Esophagus muscularis mucosa (tissue), 4 donors: ENCODE measurements at regions of chr6 and their contacts with region 1.

Region 1: GRCh38 chr6:49849213-49849907 is 17.0 kb downstream of the CRISP1 start:
- DNase-seq: no peak
- H3K4me3 ChIP-seq: no peak overlapping the region
- H3K27ac ChIP-seq: no peak overlapping the region
- H3K4me1 ChIP-seq: no peaks in the 10 kb centered on the region
- H3K27me3 ChIP-seq: no peaks in the 10 kb centered on the region
- CTCF ChIP-seq: peak; percentile 61 to 79 (median 72)
- EP300 ChIP-seq: no peak
- POLR2A ChIP-seq: no peak

Region 2: DNA sequence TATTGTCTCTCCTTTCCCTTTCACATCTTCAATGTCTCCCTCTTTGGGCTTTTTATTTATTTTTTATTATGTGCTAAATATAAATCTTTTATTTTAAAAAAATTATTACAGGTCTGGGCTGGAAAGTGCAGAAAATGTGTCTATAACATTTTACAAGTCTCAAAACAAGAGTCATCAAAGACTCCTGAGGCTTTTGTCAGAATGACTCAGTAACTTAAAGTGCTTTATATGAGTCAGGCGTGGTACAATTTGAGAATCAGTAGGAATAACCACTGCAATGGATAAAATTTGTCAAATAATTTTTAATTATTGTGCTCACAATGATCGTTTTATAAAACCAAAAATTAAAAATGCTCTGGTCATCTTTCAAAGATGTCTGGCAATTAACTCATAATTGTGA is 580.2 kb before region 1 on chr6:
- intact Hi-C with region 1: no loop called
- DNase-seq: no peak
- H3K4me3 ChIP-seq: no peak overlapping the region
- H3K27ac ChIP-seq: no peak overlapping the region
- H3K4me1 ChIP-seq: no peaks in the 10 kb centered on the region
- H3K27me3 ChIP-seq: no peaks in the 10 kb centered on the region
- CTCF ChIP-seq: no peak
- EP300 ChIP-seq: no peak
- POLR2A ChIP-seq: no peak

Region 3: GRCh38 chr6:49531774-49532569 is 317.4 kb before region 1 on chr6:
- intact Hi-C with region 1: loop called (anchors 5 kb)
- DNase-seq: no peak
- H3K4me3 ChIP-seq: peak overlapping the region in 2 of 4 donors; percentile 3 to 18
- H3K27ac ChIP-seq: no peak overlapping the region
- H3K4me1 ChIP-seq: no peaks in the 10 kb centered on the region
- H3K27me3 ChIP-seq: no peaks in the 10 kb centered on the region
- CTCF ChIP-seq: peak; percentile 64 to 71 (median 68)
- EP300 ChIP-seq: no peak
- POLR2A ChIP-seq: no peak

Region 4: DNA sequence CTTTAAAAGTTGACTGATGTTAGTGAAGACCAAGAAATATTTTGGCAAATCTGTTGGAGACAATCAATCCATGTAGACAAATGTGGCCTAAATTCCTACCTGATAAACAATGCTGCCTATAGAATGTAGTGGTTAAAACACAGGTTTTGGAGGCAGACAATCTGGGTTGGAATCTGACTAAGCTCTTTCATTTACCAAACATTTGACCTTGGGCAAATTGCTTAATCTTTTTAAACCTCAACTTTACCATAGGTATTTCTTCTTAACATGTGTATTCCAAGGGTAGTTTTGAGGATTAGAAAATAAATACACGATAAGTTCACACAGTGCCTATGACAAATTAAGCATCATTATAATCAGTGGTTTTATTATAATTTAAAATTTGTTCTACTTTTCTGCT is 224.2 kb before region 1 on chr6:
- intact Hi-C with region 1: loop called (anchors 5 kb)
- DNase-seq: no peak
- H3K4me3 ChIP-seq: no peak overlapping the region
- H3K27ac ChIP-seq: no peak overlapping the region
- H3K4me1 ChIP-seq: no peaks in the 10 kb centered on the region
- H3K27me3 ChIP-seq: peaks cover 0 to 4% (median 0%) of the 10 kb centered on the region in 4 donors
- CTCF ChIP-seq: no peak
- EP300 ChIP-seq: no peak
- POLR2A ChIP-seq: no peak

Region 5: GRCh38 chr6:49776444-49776843 is 72.9 kb before region 1 on chr6:
- intact Hi-C with region 1: no loop called
- DNase-seq: no peak
- H3K4me3 ChIP-seq: no peak overlapping the region
- H3K27ac ChIP-seq: no peak overlapping the region
- H3K4me1 ChIP-seq: no peaks in the 10 kb centered on the region
- H3K27me3 ChIP-seq: no peaks in the 10 kb centered on the region
- CTCF ChIP-seq: no peak
- EP300 ChIP-seq: no peak
- POLR2A ChIP-seq: no peak